Activated naive CD4-positive, alpha-beta T cell treated with anti-CD3 and anti-CD28 coated beads for 36 hours (primary cell): ENCODE measurements at regions of chr9 and their contacts with region 1.

Region 1: DNA sequence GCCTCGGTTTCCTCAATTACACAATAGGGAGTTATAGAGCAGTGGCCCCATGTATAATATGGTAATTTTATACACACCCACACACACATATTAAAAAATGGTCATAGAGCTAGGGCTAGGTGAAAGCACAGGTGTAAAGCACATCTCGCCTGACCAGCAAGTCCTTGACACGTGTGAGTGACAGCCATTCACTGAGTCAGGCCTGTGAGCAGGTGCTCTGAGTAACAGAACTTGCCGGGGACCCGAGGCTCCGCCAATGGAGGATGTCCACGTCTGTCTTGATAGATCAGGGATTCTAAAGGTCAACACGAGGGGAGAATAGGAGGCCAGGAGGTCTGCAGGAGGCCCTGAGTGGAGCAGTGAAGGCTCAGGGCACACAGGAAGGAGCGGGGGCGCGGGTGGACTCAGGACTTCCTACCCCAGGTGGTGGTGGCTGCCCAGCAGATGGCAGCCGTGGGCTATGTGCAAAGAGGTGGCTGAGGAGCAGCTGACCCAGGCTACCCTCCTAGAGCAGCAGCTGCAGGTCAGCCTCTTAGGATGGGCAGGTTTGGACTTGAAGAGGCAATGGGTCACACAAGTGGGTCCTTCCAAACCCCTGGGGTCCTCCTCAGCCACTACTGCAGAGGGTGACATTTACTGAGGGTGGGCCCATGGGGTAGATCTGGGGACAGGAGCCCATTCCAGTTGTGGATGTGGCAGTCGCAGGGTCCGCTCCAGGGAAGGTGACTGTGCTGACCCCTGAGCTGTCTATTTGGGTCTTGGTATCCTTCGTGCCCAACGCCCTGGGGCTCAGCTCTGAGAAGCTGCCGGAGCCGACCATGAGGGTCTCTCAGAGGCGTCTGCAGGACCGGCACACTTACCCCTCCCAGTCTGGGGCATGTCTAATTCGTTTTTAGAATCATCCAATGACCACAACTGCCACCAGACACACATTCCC is 45.9 kb downstream of the PRRT1B start:
- DNase-seq: peak; percentile 86
- H3K4me3 Mint-ChIP-seq: no peak overlapping the region
- H3K27ac Mint-ChIP-seq: peak overlapping the region; percentile 33
- H3K4me1 Mint-ChIP-seq: peaks cover 17% of the 10 kb centered on the region
- H3K27me3 Mint-ChIP-seq: no peaks in the 10 kb centered on the region

Region 2: GRCh38 chr9:131578731-131579504 is 12.3 kb before region 1 on chr9:
- CTCF ChIA-PET with region 1: interaction called, 11 read pairs
- intact Hi-C with region 1: no loop called
- DNase-seq: peak; percentile 68
- H3K4me3 Mint-ChIP-seq: peak overlapping the region; percentile 46
- H3K27ac Mint-ChIP-seq: peak overlapping the region; percentile 88
- H3K4me1 Mint-ChIP-seq: peaks cover 23% of the 10 kb centered on the region
- H3K27me3 Mint-ChIP-seq: no peaks in the 10 kb centered on the region

Region 3: GRCh38 chr9:131747356-131747755 is 156.2 kb after region 1 on chr9:
- CTCF ChIA-PET with region 1: interaction called, 32 read pairs
- intact Hi-C with region 1: no loop called
- DNase-seq: peak; percentile 28
- H3K4me3 Mint-ChIP-seq: no peak overlapping the region
- H3K27ac Mint-ChIP-seq: no peak overlapping the region
- H3K4me1 Mint-ChIP-seq: peaks cover 24% of the 10 kb centered on the region
- H3K27me3 Mint-ChIP-seq: no peaks in the 10 kb centered on the region